Activated CD4-positive, alpha-beta T cell treated with anti-CD3 and anti-CD28 coated beads, Interleukin-2, amount 10 ng/mL, durations not matched to agents 24 days and 14 days (primary cell): ENCODE measurements at regions of chr9 and their contacts with region 1.

Region 1: DNA sequence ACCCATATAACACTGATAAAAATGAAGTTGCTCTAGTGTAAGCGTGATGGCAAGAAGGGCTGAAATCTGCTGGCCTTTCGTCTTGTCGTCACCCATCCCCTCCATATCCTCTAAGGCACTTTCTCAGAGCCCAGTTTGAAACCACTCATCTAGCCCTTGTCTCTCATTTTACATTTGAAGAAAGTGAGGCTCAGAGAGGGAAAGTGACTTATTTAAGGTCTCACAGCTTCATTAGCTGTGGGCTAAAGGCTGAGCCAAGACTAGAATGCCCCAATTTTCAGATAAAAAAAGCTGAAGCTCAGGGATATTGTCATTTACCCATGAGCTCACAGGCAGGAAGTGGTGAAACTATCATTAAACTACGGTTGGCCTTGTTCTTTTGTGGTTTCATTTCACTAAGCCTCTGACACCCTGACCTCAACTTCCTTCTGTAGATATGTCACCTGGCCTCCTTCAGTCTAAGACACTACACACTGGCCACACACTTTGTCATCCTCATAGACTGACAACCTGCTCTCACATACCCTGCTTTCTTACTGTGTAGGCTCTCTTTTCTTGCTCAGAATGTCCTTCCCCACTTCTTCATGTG is 176.7 kb upstream of the DMAC1 start:
- DNase-seq: peak; percentile 91
- H3K4me3 Mint-ChIP-seq: peak overlapping the region; percentile 65
- H3K27ac Mint-ChIP-seq: peak overlapping the region; percentile 81
- H3K4me1 Mint-ChIP-seq: peaks cover 49% of the 10 kb centered on the region
- H3K27me3 Mint-ChIP-seq: no peaks in the 10 kb centered on the region

Region 2: DNA sequence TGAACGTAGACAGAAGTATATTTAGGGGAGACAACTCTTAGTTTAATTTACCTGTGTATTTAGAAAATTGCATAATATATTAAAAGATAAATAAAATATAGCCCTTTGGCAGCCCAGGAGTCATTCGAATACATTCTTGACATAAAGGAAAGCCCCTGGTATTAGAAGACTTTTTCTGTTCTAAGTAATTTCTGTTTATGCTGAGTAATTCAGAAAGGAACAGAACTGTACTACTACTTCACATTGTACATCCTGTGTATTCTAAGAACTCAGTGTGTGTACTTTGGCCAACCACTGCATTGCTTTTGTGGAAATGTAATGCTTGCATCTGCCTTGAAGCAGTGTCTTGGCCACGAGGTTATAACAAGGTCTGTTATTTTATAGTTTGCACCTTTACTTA is 1082.1 kb before region 1 on chr9:
- intact Hi-C with region 1: loop called (anchors 10 kb)
- DNase-seq: peak; percentile 76
- H3K4me3 Mint-ChIP-seq: peak overlapping the region; percentile 57
- H3K27ac Mint-ChIP-seq: peak overlapping the region; percentile 69
- H3K4me1 Mint-ChIP-seq: peaks cover 29% of the 10 kb centered on the region
- H3K27me3 Mint-ChIP-seq: no peaks in the 10 kb centered on the region

Region 3: GRCh38 chr9:7756088-7756487 is 220.2 kb before region 1 on chr9:
- intact Hi-C with region 1: loop called (anchors 1 kb)
- DNase-seq: peak; percentile 80
- H3K4me3 Mint-ChIP-seq: peak overlapping the region; percentile 39
- H3K27ac Mint-ChIP-seq: peak overlapping the region; percentile 84
- H3K4me1 Mint-ChIP-seq: peaks cover 22% of the 10 kb centered on the region
- H3K27me3 Mint-ChIP-seq: peaks cover 1% of the 10 kb centered on the region

Region 4: GRCh38 chr9:7935681-7936080 is 40.6 kb before region 1 on chr9:
- intact Hi-C with region 1: loop called (anchors 1 kb)
- DNase-seq: peak; percentile 79
- H3K4me3 Mint-ChIP-seq: peak overlapping the region; percentile 81
- H3K27ac Mint-ChIP-seq: peak overlapping the region; percentile 86
- H3K4me1 Mint-ChIP-seq: peaks cover 17% of the 10 kb centered on the region
- H3K27me3 Mint-ChIP-seq: no peaks in the 10 kb centered on the region

Region 5: GRCh38 chr9:8429768-8430167 is 453.5 kb after region 1 on chr9:
- intact Hi-C with region 1: loop called (anchors 2 kb)
- DNase-seq: peak; percentile 54
- H3K4me3 Mint-ChIP-seq: no peak overlapping the region
- H3K27ac Mint-ChIP-seq: peak overlapping the region; percentile 42
- H3K4me1 Mint-ChIP-seq: peaks cover 22% of the 10 kb centered on the region
- H3K27me3 Mint-ChIP-seq: no peaks in the 10 kb centered on the region